ENCODE measurements at regions of chr5 and their contacts with region 1.

Region 1: GRCh38 chr5:6632917-6633468 is at the starts of genes NSUN2 and SRD5A1:
- DNase-seq: peak; percentile 93 to 98 (median 96)
- ATAC-seq: peak; percentile 97
- H3K4me3 ChIP-seq: peak within 1 kb of the TSS; percentile 89 to 99
- H3K27ac ChIP-seq: peak within 1 kb of the TSS; percentile 94 to 97
- H3K4me1 ChIP-seq: peaks cover 0 to 38% of the 10 kb centered on the region in 2 donors
- H3K27me3 ChIP-seq: no peaks in the 10 kb centered on the region
- CTCF ChIP-seq: no peak
- polyA plus RNA-seq, gene NSUN2: 52.6 to 93.9 (median 61.4) TPM
- polyA plus RNA-seq, gene SRD5A1: 10.0 to 13.6 (median 12.5) TPM

Region 2: GRCh38 chr5:6435356-6435755 is 197.6 kb before region 1 on chr5:
- intact Hi-C with region 1: no loop called
- DNase-seq: no peak
- ATAC-seq: no peak
- H3K4me3 ChIP-seq: no peak overlapping the region
- H3K27ac ChIP-seq: no peak overlapping the region
- H3K4me1 ChIP-seq: no peaks in the 10 kb centered on the region
- H3K27me3 ChIP-seq: peaks cover 0 to 52% of the 10 kb centered on the region in 2 donors
- CTCF ChIP-seq: no peak

Region 3: GRCh38 chr5:6745706-6746222 is 112.8 kb after region 1 on chr5:
- intact Hi-C with region 1: loop called in 1 of 2 experiments (anchors 10 kb)
- DNase-seq: peak in 1 of 4 donors; percentile 58
- ATAC-seq: peak; percentile 88
- H3K4me3 ChIP-seq: no peak overlapping the region
- H3K27ac ChIP-seq: no peak overlapping the region
- H3K4me1 ChIP-seq: peaks cover 0 to 9% of the 10 kb centered on the region in 2 donors
- H3K27me3 ChIP-seq: no peaks in the 10 kb centered on the region
- CTCF ChIP-seq: peak; percentile 53 to 61